Posterior vena cava (tissue), 2 donors: ENCODE measurements at regions of chr18 and their contacts with region 1.

Region 1: DNA sequence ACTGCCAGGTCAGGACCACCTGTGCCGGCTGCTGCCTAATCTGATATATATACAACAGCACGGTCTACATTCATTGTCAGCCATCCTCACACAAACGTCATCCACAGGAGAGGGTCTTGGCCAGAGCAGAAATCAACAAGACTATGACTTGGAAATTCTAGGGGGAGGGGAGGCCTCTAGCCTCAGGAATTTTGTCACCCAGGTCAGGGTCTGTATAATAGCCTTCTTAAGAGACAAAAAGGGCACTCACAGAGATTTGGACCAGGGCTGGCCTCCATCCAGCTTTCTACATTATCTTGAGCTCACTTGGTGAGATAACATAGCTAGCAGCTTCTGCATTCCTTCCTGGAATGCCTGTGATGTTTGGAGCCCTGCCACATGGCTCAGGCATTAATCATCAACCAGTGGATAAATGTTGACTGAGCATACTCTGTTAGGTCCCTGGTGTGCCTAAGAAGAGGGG is 50.4 kb upstream of the CTIF start:
- DNase-seq: peak; percentile 91

Region 2: GRCh38 chr18:48470484-48471180 is 17.8 kb before region 1 on chr18:
- intact Hi-C with region 1: no loop called
- DNase-seq: no peak

Region 3: DNA sequence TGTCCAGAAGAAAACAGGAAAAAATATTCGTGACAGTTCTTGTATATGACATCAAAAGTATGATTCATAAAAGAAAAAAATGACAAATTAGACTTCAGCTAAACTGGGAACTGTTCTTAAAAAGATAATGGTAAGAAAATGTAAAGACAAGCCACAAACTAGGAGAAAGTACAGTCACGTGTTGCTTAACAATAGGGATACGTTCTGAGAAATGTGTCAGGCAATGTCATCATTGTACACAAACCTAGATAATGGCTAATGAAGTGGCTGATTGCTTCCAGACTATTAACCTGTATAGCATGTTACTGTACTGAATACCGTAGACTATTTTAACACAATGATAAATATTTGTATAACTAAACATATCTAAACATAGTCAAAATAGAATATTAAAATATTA is 14.5 kb after region 1 on chr18:
- intact Hi-C with region 1: loop called in 1 of 2 experiments (anchors 1 kb)
- DNase-seq: no peak

Region 4: GRCh38 chr18:48622911-48623431 is 134.6 kb after region 1 on chr18:
- intact Hi-C with region 1: loop called in 1 of 2 experiments (anchors 1 kb)
- DNase-seq: no peak